ENCODE measurements at regions of chr7 and their contacts with region 1.

Region 1: GRCh38 chr7:332646-333392 is 42.8 kb downstream of the FOXL3 start:
- DNase-seq: peak in 1 of 2 experiments; percentile 91
- H3K4me3 ChIP-seq: peak overlapping the region; percentile 58; the same call in 1 of the 2 replicates
- H3K27ac ChIP-seq: no peak overlapping the region
- H3K4me1 ChIP-seq: peaks cover 9% of the 10 kb centered on the region; the same call in 1 of the 2 replicates
- H3K27me3 ChIP-seq: peaks cover 47% of the 10 kb centered on the region
- CTCF ChIP-seq: peak; percentile 87

Region 2: GRCh38 chr7:322111-322671 is 10.6 kb before region 1 on chr7:
- CTCF ChIA-PET with region 1: interaction called, 3 read pairs
- POLR2A ChIA-PET with region 1: interaction called, 11 read pairs
- intact Hi-C with region 1: no loop called
- DNase-seq: peak; percentile 45 to 92
- H3K4me3 ChIP-seq: no peak overlapping the region
- H3K27ac ChIP-seq: no peak overlapping the region
- H3K4me1 ChIP-seq: peaks cover 20% of the 10 kb centered on the region
- H3K27me3 ChIP-seq: peaks cover 58% of the 10 kb centered on the region
- CTCF ChIP-seq: peak; percentile 83

Region 3: GRCh38 chr7:371119-371778 is 38.4 kb after region 1 on chr7:
- CTCF ChIA-PET with region 1: no interaction called
- POLR2A ChIA-PET with region 1: no interaction called
- intact Hi-C with region 1: no loop called
- DNase-seq: no peak
- H3K4me3 ChIP-seq: no peak overlapping the region
- H3K27ac ChIP-seq: no peak overlapping the region
- H3K4me1 ChIP-seq: no peaks in the 10 kb centered on the region
- H3K27me3 ChIP-seq: peaks cover 77% of the 10 kb centered on the region
- CTCF ChIP-seq: no peak

Region 4: GRCh38 chr7:518630-519483 is 186.0 kb after region 1 on chr7:
- CTCF ChIA-PET with region 1: no interaction called
- POLR2A ChIA-PET with region 1: no interaction called
- intact Hi-C with region 1: loop called (anchors 2 kb)
- DNase-seq: peak; percentile 62 to 93
- H3K4me3 ChIP-seq: peak overlapping the region; percentile 95
- H3K27ac ChIP-seq: peak overlapping the region; percentile 17; the same call in 1 of the 2 replicates
- H3K4me1 ChIP-seq: peaks cover 10% of the 10 kb centered on the region; the same call in 1 of the 2 replicates
- H3K27me3 ChIP-seq: no peaks in the 10 kb centered on the region
- CTCF ChIP-seq: no peak

Region 5: GRCh38 chr7:732094-732541 is 399.3 kb after region 1 on chr7:
- CTCF ChIA-PET with region 1: interaction called, 5 read pairs
- POLR2A ChIA-PET with region 1: no interaction called
- intact Hi-C with region 1: loop called (anchors 2 kb)
- DNase-seq: peak; percentile 83 to 87
- H3K4me3 ChIP-seq: no peak overlapping the region
- H3K27ac ChIP-seq: peak overlapping the region; percentile 35; the same call in 1 of the 2 replicates
- H3K4me1 ChIP-seq: peaks cover 23% of the 10 kb centered on the region
- H3K27me3 ChIP-seq: no peaks in the 10 kb centered on the region
- CTCF ChIP-seq: peak; percentile 48; the same call in 1 of the 2 replicates

Region 6: DNA sequence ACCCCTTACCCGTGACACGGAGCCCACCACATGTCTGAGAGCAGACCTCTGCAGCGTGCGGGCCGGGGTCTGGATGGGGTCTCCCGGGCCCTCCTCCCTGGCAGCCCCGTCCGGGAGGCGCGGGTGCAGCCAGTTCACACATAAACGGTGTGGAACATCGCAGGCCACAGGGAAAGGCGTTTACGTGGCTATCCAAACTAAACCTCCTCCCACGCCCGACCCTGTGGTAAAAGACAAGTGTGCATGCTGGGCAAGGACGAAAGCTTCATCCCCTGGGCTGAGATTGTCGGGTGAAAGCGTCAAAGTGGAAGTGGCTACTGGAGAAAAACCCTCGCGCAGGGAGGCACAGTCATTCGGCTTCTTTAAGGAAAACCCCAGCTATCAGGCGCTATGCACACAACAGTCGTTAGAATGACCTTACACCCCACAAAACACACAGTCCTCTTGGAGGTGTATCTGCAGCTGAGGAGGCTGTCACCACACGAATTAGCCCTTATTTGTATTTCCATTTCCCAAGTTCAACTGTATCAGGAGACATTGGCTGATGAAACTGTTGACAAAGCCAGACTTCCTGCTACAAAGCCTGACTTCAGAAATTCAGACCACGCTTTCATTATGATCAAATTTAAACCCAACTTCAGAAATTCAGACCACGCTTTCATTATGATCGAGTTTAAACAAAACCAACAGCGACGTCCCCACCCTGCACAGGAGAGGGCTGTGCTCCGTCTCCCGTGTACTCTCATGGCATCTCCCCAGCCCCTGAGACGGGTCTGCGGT is 770.4 kb after region 1 on chr7:
- CTCF ChIA-PET with region 1: no interaction called
- POLR2A ChIA-PET with region 1: no interaction called
- intact Hi-C with region 1: no loop called
- DNase-seq: no peak
- H3K4me3 ChIP-seq: no peak overlapping the region
- H3K27ac ChIP-seq: no peak overlapping the region
- H3K4me1 ChIP-seq: no peaks in the 10 kb centered on the region
- H3K27me3 ChIP-seq: no peaks in the 10 kb centered on the region
- CTCF ChIP-seq: no peak

Measured in PC-9 (cell line).